ENCODE measurements at regions of chr7 and their contacts with region 1.

Region 1: DNA sequence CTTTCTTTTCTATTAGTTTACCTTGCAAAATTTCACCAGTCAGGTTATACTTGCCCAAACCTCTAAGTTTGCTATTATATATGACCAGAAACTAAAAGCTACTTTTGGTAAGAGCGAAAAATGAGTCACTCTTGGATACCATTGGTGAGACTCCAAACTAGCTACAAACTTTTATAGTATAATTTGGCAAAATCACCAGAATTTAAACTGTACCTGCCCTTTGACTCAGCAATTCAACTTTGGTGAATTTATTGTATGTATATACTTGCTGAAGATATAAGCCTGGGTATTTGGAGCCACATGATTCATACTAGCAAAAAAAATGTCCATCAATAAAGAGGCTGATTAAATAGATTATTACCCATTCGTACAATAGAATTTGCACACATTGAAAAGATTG is 178.7 kb upstream of the STEAP1 start:
- DNase-seq: no peak
- H3K4me3 ChIP-seq: no peak overlapping the region
- H3K27ac ChIP-seq: no peak overlapping the region
- H3K4me1 ChIP-seq: no peaks in the 10 kb centered on the region
- H3K27me3 ChIP-seq: no peaks in the 10 kb centered on the region
- CTCF ChIP-seq: no peak
- POLR2A ChIP-seq: no peak

Region 2: DNA sequence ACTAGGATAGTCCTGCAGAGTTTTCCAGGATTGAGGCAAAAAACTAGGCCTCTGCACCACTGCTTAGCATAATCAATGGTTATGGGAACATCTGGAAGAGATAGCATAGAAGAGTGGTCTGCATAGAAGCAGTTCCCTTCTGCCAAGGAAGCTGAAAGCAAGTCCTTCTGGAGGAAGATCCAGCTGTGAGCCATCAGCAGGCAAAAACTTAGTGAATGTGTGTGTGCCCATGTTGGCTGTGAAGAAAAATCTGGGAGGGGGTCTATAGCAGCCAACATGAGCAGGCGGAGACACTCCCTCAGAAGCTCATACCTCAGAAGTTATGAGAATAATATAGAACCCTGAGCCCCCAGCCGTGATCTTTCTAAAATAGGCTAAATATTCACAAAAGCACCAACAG is 49.4 kb before region 1 on chr7:
- CTCF ChIA-PET with region 1: no interaction called
- POLR2A ChIA-PET with region 1: no interaction called
- dilution Hi-C with region 1: no loop called
- intact Hi-C with region 1: no loop called
- DNase-seq: no peak
- H3K4me3 ChIP-seq: no peak overlapping the region
- H3K27ac ChIP-seq: no peak overlapping the region
- H3K4me1 ChIP-seq: no peaks in the 10 kb centered on the region
- H3K27me3 ChIP-seq: no peaks in the 10 kb centered on the region
- CTCF ChIP-seq: no peak
- POLR2A ChIP-seq: no peak

Region 3: DNA sequence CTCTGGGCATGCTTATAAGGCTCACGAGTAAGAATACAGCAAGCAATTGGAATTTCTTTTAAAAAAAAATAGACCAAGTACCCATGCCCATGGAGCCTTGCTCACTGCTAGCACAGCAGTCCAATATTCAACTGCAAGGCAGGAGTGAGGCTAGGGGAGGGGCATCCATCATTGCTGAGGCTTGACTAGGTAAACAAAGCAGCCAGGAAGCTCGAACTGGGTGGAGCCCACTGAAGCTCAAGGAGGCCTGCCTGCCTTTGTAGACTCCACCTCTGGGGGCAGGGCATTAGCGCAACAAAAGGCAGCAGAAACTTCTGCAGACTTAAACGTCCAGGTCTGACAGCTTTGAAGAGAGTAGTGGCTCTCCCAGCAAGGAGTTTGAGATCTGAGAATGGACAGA is 94.7 kb after region 1 on chr7:
- CTCF ChIA-PET with region 1: no interaction called
- POLR2A ChIA-PET with region 1: no interaction called
- dilution Hi-C with region 1: no loop called
- intact Hi-C with region 1: loop called (anchors 5 kb)
- DNase-seq: no peak
- H3K4me3 ChIP-seq: no peak overlapping the region
- H3K27ac ChIP-seq: no peak overlapping the region
- H3K4me1 ChIP-seq: no peaks in the 10 kb centered on the region
- H3K27me3 ChIP-seq: no peaks in the 10 kb centered on the region
- CTCF ChIP-seq: no peak
- POLR2A ChIP-seq: no peak

Region 4: GRCh38 chr7:90081621-90082020 is 106.0 kb after region 1 on chr7:
- CTCF ChIA-PET with region 1: no interaction called
- POLR2A ChIA-PET with region 1: no interaction called
- dilution Hi-C with region 1: no loop called
- intact Hi-C with region 1: no loop called
- DNase-seq: no peak
- H3K4me3 ChIP-seq: no peak overlapping the region
- H3K27ac ChIP-seq: no peak overlapping the region
- H3K4me1 ChIP-seq: no peaks in the 10 kb centered on the region
- H3K27me3 ChIP-seq: no peaks in the 10 kb centered on the region
- CTCF ChIP-seq: no peak
- POLR2A ChIP-seq: no peak

Region 5: GRCh38 chr7:90155206-90155605 is 179.6 kb after region 1 on chr7:
- CTCF ChIA-PET with region 1: no interaction called
- POLR2A ChIA-PET with region 1: no interaction called
- dilution Hi-C with region 1: no loop called
- intact Hi-C with region 1: no loop called
- DNase-seq: peak; percentile 22
- H3K4me3 ChIP-seq: peak overlapping the region; percentile 26 to 77 (median 77)
- H3K27ac ChIP-seq: peak overlapping the region; percentile 53
- H3K4me1 ChIP-seq: peaks cover 37% of the 10 kb centered on the region
- H3K27me3 ChIP-seq: no peaks in the 10 kb centered on the region
- CTCF ChIP-seq: no peak
- POLR2A ChIP-seq: no peak

Measured in endothelial cell of umbilical vein (primary cell).